Left ventricle myocardium superior (tissue), 1 donor: ENCODE measurements at regions of chr1 and their contacts with region 1.

Region 1: DNA sequence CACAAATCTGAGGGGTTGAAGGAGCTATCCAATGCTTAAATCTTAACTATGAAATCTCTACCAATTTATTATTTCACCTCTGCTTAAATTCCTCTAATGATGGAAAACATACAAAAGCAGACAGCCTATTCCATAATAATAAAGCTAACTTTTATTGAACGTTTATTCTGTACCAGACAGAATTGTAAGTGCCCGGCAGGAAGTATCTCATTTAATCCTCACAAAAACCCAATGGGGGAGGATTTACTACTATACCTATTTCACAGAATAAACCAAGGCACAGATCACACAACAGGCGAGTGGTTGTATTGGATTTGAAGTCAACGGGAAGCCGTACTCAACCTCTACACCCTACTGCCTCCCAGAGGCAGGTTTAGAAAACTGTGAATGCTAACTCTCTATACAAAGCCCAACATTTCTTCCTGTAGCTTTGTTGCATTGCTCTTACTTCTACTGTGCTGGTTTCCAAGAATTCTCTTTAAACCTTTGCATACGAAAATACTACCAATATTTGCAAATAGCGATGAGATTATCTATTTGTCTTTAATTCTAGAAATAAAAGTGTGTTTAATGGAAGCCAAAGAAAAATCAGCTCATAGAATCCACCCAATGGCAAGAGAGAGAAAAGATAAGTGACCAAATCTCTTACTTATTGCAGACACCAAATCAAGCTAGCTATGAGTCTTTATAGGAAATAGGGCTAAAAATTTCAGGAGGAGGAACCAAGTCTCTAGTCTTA is 33.5 kb upstream of the C1orf53 start:
- DNase-seq: no peak
- ATAC-seq: peak; percentile 86

Region 2: GRCh38 chr1:197521118-197521739 is 347.7 kb before region 1 on chr1:
- intact Hi-C with region 1: loop called (anchors 10 kb)
- DNase-seq: no peak
- ATAC-seq: no peak

Region 3: DNA sequence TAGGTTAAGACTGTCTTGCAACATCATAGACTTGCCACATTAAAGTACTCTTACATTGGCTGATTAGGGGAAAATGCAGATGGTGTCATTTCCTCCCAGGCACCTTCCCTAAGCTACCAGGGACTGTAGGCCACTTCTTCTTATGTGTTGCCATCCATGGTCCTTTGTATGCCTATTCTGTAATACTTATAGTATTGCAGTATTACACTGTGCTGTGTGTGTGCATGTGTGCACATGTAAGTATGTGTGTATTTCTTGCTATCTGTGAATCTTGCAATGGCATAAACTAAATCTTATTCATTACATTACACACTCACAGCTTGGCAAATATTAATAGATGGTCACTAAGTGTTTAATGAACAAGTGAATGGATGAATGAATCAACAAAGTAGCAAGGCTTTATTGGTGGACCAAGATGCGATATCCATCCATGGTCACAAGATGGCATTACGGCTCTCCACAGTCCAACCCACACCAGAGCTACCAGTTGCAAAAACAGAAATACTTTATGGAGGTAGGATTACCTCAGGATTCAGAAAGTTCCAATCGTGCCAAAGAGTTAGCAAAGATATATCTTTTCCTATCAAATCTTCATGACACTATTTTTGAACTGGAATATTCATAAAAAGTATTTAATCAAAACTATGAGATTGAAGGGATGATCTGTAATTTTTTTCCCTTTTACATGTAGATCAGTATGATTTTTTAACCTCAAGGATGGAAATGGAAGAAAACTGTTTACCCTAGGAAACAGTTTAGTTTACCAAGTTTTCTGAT is 253.8 kb before region 1 on chr1:
- intact Hi-C with region 1: loop called (anchors 2 kb)
- DNase-seq: no peak
- ATAC-seq: peak; percentile 76

Region 4: DNA sequence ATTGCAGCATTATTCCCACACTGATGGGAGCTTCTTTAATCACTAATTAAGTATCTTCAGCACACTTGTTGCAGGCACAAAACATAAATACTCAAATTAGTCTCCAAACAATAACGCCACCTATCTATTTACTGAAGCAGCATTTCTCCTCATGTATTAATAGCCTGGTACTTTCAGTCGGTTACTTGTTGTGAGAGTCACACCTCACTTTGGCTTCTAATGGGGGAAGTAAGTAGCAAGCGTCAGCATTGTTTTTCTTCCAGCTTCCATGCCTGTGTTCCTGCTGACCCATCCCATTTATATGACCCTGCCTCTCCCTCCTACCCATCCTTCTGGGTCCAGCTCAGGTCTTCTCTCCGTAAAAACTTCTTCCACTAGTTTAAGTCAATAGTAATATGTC is 61.7 kb before region 1 on chr1:
- intact Hi-C with region 1: no loop called
- DNase-seq: no peak
- ATAC-seq: peak; percentile 54